Lower leg skin (tissue), 4 donors: ENCODE measurements at regions of chrX and their contacts with region 1.

Region 1: DNA sequence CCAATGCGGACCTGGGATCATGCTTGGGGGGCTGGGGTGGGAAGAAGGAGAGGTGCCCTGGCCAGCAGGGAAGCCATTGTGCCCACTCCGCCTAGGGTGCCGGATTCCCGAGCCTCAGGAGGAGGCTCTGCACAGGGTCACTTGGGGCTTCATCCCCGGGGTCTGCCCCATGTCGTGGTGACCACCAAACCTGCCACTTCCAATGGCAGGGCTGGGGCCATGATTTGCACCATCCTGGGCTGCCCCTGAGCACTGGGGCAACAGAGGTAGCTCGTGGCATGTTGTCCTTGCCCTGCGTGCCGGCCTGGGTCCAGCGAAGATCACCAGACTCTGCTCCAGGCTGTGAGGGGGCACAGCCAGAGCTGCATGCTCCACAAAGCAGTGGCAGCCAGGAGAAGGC is 71.4 kb upstream of the DCAF12L2 start:
- DNase-seq: peak in 1 of 2 donors; percentile 60
- H3K4me3 ChIP-seq: no peak overlapping the region
- CTCF ChIP-seq: no peak
- POLR2A ChIP-seq: no peak

Region 2: DNA sequence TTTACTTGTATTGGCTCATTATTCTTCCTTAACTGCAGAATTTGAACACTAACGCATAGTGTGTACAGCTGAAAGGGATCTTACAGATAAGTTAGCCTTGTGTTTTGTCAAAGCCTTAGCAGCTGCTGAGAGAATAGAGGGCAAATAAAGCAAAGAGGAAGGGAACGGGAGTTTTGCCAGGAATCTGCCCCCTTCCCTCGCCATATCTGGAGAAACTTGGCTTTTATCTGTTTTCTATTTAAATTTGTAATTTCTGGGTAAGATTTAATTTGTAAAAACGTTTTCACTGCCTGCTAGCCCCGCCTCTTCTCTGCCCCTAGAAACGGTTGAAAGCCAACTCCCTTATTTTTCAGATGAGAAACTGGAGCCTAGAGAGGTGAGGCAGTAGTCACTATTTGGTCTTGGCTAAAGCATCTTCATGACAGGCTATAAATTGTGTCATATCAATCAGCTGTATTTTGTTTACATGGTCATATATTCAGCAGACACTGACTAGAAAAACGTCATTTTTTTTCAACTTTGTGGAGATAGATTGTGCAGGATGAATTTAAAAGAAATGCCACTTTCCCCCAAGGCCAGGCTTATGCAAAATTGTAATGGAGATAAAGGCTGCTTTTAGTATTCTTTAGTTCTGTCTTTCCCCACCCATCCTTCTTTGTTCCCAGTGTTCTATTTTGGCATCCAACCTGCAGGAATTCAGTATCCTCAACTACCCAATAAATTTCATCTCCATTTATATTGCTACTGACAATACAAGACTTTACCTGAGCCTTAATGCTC is 1571.7 kb before region 1 on chrX:
- intact Hi-C with region 1: no loop called
- DNase-seq: no peak
- H3K4me3 ChIP-seq: no peak overlapping the region
- CTCF ChIP-seq: no peak
- POLR2A ChIP-seq: no peak

Region 3: DNA sequence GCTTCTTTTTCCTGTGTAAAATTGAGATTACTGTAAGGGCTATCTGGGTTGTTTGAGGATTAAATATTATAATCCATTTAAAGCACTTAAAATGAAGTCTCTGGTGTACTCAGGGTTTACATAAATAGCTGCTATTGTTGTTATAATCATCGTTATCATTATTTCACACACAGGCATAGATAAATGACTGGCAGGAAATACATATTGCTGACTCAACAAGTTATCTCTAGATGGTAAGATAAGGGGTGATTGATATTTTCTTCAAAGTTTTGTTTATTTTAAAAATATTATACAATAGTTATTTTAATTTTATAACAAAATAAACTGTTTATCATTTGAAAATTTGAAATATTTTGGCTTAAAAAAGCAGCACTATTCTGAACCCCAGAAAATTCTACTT is 62.9 kb after region 1 on chrX:
- intact Hi-C with region 1: no loop called
- DNase-seq: no peak
- H3K4me3 ChIP-seq: no peak overlapping the region
- CTCF ChIP-seq: no peak
- POLR2A ChIP-seq: no peak

Region 4: GRCh38 chrX:126655061-126655460 is 417.5 kb after region 1 on chrX:
- intact Hi-C with region 1: no loop called
- DNase-seq: no peak
- H3K4me3 ChIP-seq: no peak overlapping the region
- CTCF ChIP-seq: no peak
- POLR2A ChIP-seq: no peak

Region 5: DNA sequence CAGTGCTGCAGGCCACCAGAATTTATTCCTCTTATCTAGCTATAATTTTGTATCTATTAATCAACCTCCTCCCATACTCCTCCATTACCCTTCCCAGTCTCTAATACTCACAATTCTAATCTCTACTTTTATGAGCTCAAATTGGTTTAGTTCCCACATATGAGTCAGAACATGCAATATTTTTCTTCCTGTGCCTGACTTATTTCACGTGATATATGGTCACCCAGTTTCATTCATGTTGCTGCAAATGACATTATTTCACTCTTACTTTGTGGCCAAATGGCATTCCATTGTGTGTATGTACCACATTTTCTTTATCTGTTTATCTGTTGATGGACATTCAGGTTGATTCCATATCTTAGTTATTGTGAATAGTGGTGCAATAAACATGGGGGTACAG is 1331.2 kb after region 1 on chrX:
- intact Hi-C with region 1: no loop called
- DNase-seq: no peak
- H3K4me3 ChIP-seq: no peak overlapping the region
- CTCF ChIP-seq: no peak
- POLR2A ChIP-seq: no peak

Region 6: GRCh38 chrX:127596882-127597281 is 1359.4 kb after region 1 on chrX:
- intact Hi-C with region 1: loop called (anchors 5 kb)
- DNase-seq: no peak
- H3K4me3 ChIP-seq: no peak overlapping the region
- CTCF ChIP-seq: no peak
- POLR2A ChIP-seq: no peak